ENCODE measurements at regions of chr19 and their contacts with region 1.

Region 1: GRCh38 chr19:7366701-7367420 is 18.1 kb downstream of the ARHGEF18 start:
- DNase-seq: peak; percentile 35
- H3K4me3 Mint-ChIP-seq: no peak overlapping the region
- H3K27ac Mint-ChIP-seq: peak overlapping the region; percentile 13
- H3K4me1 Mint-ChIP-seq: peaks cover 6% of the 10 kb centered on the region
- H3K27me3 Mint-ChIP-seq: no peaks in the 10 kb centered on the region

Region 2: GRCh38 chr19:7355151-7355820 is 11.6 kb before region 1 on chr19:
- CTCF ChIA-PET with region 1: interaction called, 34 read pairs
- POLR2A ChIA-PET with region 1: no interaction called
- intact Hi-C with region 1: no loop called
- DNase-seq: no peak
- H3K4me3 Mint-ChIP-seq: no peak overlapping the region
- H3K27ac Mint-ChIP-seq: no peak overlapping the region
- H3K4me1 Mint-ChIP-seq: peaks cover 35% of the 10 kb centered on the region
- H3K27me3 Mint-ChIP-seq: no peaks in the 10 kb centered on the region

Region 3: GRCh38 chr19:7386308-7386707 is 19.4 kb after region 1 on chr19:
- CTCF ChIA-PET with region 1: interaction called, 29 read pairs
- POLR2A ChIA-PET with region 1: interaction called, 3 read pairs
- intact Hi-C with region 1: loop called (anchors 2 kb)
- DNase-seq: peak; percentile 67
- H3K4me3 Mint-ChIP-seq: no peak overlapping the region
- H3K27ac Mint-ChIP-seq: peak overlapping the region; percentile 96
- H3K4me1 Mint-ChIP-seq: peaks cover 30% of the 10 kb centered on the region
- H3K27me3 Mint-ChIP-seq: no peaks in the 10 kb centered on the region

Region 4: DNA sequence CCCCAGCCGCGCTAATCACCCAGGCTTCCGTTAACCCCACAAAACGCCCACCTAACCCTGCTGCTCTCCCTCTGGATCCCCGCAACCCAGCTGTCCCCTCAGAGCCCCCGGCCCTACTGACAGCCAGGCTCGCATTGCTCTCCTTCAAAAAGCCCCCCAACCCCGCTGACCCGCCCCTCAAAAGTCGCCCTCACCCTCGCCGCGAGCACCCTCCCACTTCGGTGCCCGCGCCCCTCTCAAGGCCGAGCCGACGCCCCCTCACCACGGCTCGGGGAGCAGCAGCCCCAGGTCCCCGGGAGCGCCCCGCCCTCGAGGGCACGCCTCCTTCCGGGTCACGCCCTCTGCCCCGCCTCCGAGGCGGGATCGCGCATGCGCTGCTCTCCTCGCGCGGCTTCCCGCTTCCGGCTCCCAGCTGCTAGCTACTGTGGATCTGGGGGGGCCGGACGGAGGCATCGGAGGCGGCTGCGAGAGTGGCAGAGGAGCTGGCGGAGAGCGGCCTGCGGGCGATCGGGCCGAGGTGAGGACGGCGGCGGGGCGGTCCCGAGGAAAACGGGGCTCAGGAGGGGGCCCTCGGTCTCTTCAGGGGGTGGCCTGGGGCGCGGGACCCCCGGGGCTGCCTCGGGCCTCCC is 28.0 kb after region 1 on chr19:
- CTCF ChIA-PET with region 1: interaction called, 20 read pairs
- POLR2A ChIA-PET with region 1: no interaction called
- intact Hi-C with region 1: no loop called
- DNase-seq: peak; percentile 95
- H3K4me3 Mint-ChIP-seq: peak overlapping the region; percentile 87
- H3K27ac Mint-ChIP-seq: peak overlapping the region; percentile 85
- H3K4me1 Mint-ChIP-seq: peaks cover 28% of the 10 kb centered on the region
- H3K27me3 Mint-ChIP-seq: no peaks in the 10 kb centered on the region

Region 5: DNA sequence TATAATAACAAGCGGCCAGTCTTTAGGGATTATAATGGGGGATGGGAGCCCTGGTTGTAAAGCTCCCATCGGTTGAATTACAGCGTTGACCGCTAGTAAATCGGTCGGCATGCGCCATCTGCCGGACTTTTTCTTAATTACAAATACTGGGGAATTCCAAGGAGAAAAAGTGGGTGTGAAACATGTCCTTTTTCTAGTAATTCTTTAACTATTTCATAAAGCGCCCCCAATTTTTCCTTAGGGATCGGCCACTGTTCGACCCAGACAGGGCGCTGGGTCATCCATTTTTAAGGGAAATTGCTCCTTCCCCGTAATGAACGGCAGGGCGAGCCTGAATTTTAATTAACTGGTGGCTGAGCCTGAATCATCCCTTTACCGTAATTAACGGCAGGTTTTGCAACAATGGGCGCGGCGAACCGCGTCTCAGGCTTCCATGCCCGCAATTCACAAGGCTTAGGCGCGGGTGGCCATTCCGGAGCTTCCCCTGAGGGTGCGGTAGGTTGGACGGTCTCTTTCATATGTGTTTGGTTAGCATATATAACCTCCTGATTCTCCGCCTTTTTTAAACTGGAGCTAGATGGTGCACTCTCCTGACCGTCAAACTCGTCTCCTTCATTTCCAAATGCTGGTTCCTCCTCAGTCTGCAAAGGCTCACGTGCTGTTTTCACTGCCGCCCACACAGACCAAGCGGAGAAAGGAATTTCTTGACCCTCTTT is 432.9 kb after region 1 on chr19:
- CTCF ChIA-PET with region 1: interaction called, 3 read pairs
- POLR2A ChIA-PET with region 1: no interaction called
- intact Hi-C with region 1: loop called (anchors 10 kb)
- DNase-seq: peak; percentile 69
- H3K4me3 Mint-ChIP-seq: peak overlapping the region; percentile 39
- H3K27ac Mint-ChIP-seq: no peak overlapping the region
- H3K4me1 Mint-ChIP-seq: peaks cover 7% of the 10 kb centered on the region
- H3K27me3 Mint-ChIP-seq: peaks cover 25% of the 10 kb centered on the region